Body of pancreas (tissue), 4 donors: ENCODE measurements at regions of chr20 and their contacts with region 1.

Region 1: GRCh38 chr20:1576641-1577040 is 19.1 kb upstream of the SIRPD start:
- DNase-seq: no peak
- ATAC-seq: no peak
- H3K4me3 ChIP-seq: no peak overlapping the region
- H3K27ac ChIP-seq: no peak overlapping the region
- H3K4me1 ChIP-seq: no peaks in the 10 kb centered on the region
- H3K27me3 ChIP-seq: no peaks in the 10 kb centered on the region
- CTCF ChIP-seq: no peak
- POLR2A ChIP-seq: no peak

Region 2: GRCh38 chr20:1456300-1456699 is 120.3 kb before region 1 on chr20:
- intact Hi-C with region 1: no loop called
- DNase-seq: no peak
- ATAC-seq: no peak
- H3K4me3 ChIP-seq: no peak overlapping the region
- H3K27ac ChIP-seq: no peak overlapping the region
- H3K4me1 ChIP-seq: no peaks in the 10 kb centered on the region
- H3K27me3 ChIP-seq: no peaks in the 10 kb centered on the region
- CTCF ChIP-seq: no peak
- POLR2A ChIP-seq: no peak

Region 3: GRCh38 chr20:1619861-1620444 is 43.3 kb after region 1 on chr20 and contains the start of gene SIRPB1:
- intact Hi-C with region 1: loop called (anchors 5 kb)
- DNase-seq: peak in 1 of 4 donors; percentile 41
- ATAC-seq: no peak
- H3K4me3 ChIP-seq: no peak within 1 kb of the TSS
- H3K27ac ChIP-seq: peak within 1 kb of the TSS in 1 of 4 donors; percentile 59
- H3K4me1 ChIP-seq: no peaks in the 10 kb centered on the region
- H3K27me3 ChIP-seq: no peaks in the 10 kb centered on the region
- CTCF ChIP-seq: no peak
- POLR2A ChIP-seq: peak in 1 of 3 donors; percentile 12
- total RNA-seq, gene SIRPB1: 1.3 to 14.2 TPM